IMR-90 (cell line): ENCODE measurements at regions of chr2 and their contacts with region 1.

Region 1: DNA sequence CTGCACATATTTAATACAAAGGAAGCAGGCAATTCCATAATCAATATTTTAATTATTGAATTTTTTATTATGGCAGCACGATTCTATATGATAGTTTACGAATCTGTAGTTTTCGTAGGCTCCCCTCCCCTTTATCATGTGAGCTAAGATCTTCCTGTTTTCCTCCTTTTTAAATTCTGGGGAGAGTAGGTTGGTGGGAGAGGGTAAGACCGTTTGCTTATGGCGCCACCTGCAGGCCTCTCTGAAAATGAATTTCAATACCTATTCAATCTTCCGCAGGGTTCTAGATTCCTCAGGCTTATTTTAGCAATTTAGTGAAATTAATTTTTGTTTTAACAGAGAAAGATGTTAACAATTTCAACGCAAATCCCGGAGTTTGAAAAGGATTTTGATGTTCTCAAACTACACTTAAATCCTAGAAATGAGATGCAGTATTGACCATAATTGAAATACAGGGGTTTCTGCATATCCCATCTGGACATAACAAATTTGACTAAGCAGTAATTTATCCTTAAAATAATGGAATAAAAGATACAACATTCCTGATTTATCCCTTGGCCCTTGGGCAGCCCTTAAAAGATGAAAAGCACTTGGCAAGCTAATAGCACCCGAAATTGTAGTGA is 12.8 kb upstream of the GBX2 start:
- DNase-seq: peak; percentile 65
- ATAC-seq: peak; percentile 40
- H3K4me3 ChIP-seq: no peak overlapping the region
- H3K27ac ChIP-seq: no peak overlapping the region
- H3K4me1 ChIP-seq: peaks cover 6% of the 10 kb centered on the region; the same call in 1 of the 2 replicates
- H3K27me3 ChIP-seq: peaks cover 8% of the 10 kb centered on the region; the same call in 1 of the 2 replicates
- CTCF ChIP-seq: peak; percentile 81
- POLR2A ChIP-seq: no peak
- RAD21 ChIP-seq: peak; percentile 78

Region 2: GRCh38 chr2:235358981-235359471 is 821.9 kb before region 1 on chr2:
- CTCF ChIA-PET with region 1: no interaction called
- POLR2A ChIA-PET with region 1: no interaction called
- dilution Hi-C with region 1: no loop called
- in situ Hi-C with region 1: no loop called
- intact Hi-C with region 1: no loop called
- DNase-seq: peak; percentile 10
- ATAC-seq: no peak
- H3K4me3 ChIP-seq: no peak overlapping the region
- H3K27ac ChIP-seq: no peak overlapping the region
- H3K4me1 ChIP-seq: no peaks in the 10 kb centered on the region
- H3K27me3 ChIP-seq: peaks cover 37% of the 10 kb centered on the region
- CTCF ChIP-seq: no peak
- POLR2A ChIP-seq: no peak
- RAD21 ChIP-seq: no peak

Region 3: DNA sequence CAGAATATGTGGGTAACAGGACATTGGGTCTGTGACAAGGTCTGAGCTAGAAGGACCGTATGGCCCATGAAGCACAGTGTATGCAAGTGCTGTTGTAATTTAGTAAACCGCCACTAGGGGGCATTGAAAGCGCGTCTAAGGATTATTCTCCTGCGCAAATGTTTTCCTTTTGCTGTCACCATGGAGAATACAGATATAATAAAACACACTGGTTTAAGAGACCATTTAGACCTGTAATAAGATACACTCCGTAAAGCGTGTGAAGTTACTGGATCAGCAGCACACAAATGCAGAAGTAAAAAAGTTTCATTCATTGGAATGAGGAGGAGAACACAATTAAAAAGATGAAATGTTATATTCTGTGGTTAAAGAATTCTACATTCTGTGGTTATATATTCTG is 414.7 kb before region 1 on chr2:
- CTCF ChIA-PET with region 1: interaction called, 6 read pairs
- POLR2A ChIA-PET with region 1: no interaction called
- dilution Hi-C with region 1: no loop called
- in situ Hi-C with region 1: loop called (anchors 5 kb)
- intact Hi-C with region 1: loop called (anchors 1 kb)
- DNase-seq: peak; percentile 74
- ATAC-seq: peak; percentile 96
- H3K4me3 ChIP-seq: no peak overlapping the region
- H3K27ac ChIP-seq: no peak overlapping the region
- H3K4me1 ChIP-seq: no peaks in the 10 kb centered on the region
- H3K27me3 ChIP-seq: no peaks in the 10 kb centered on the region
- CTCF ChIP-seq: peak; percentile 89
- POLR2A ChIP-seq: no peak
- RAD21 ChIP-seq: peak; percentile 79

Region 4: GRCh38 chr2:235802538-235803427 is 378.2 kb before region 1 on chr2:
- CTCF ChIA-PET with region 1: interaction called, 5 read pairs
- POLR2A ChIA-PET with region 1: no interaction called
- dilution Hi-C with region 1: loop called (anchors 25 kb)
- in situ Hi-C with region 1: no loop called
- intact Hi-C with region 1: loop called (anchors 1 kb)
- DNase-seq: peak; percentile 11
- ATAC-seq: peak; percentile 46; the same call in 1 of the 2 replicates
- H3K4me3 ChIP-seq: no peak overlapping the region
- H3K27ac ChIP-seq: no peak overlapping the region
- H3K4me1 ChIP-seq: no peaks in the 10 kb centered on the region
- H3K27me3 ChIP-seq: no peaks in the 10 kb centered on the region
- CTCF ChIP-seq: peak; percentile 54
- POLR2A ChIP-seq: no peak
- RAD21 ChIP-seq: peak; percentile 58

Region 5: DNA sequence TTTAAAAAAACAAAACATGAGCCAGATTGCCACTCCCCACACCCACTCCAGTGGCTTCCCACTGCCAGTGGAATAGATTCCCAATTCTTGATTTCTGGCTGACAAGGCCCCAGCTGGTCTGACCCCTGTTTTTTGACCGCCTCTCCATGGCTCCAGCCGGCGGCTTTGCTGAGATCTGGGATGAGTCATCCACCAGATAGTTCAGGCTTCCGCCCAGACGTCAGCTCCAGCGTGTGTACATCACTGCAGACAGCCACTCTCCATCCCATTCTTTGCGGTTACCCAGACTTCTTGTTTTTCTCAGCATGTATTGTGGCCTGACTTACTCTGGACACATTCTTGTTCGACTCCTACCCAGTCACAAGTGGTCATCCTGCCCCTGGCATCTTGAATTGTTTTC is 240.6 kb before region 1 on chr2:
- CTCF ChIA-PET with region 1: interaction called, 3 read pairs
- POLR2A ChIA-PET with region 1: no interaction called
- dilution Hi-C with region 1: no loop called
- in situ Hi-C with region 1: no loop called
- intact Hi-C with region 1: loop called (anchors 10 kb)
- DNase-seq: peak; percentile 97
- ATAC-seq: peak; percentile 93
- H3K4me3 ChIP-seq: no peak overlapping the region
- H3K27ac ChIP-seq: peak overlapping the region; percentile 47
- H3K4me1 ChIP-seq: peaks cover 13% of the 10 kb centered on the region
- H3K27me3 ChIP-seq: no peaks in the 10 kb centered on the region
- CTCF ChIP-seq: no peak
- POLR2A ChIP-seq: no peak
- RAD21 ChIP-seq: no peak